CD8-positive, alpha-beta T cell (primary cell): ENCODE measurements at regions of chr14 and their contacts with region 1.

Region 1: DNA sequence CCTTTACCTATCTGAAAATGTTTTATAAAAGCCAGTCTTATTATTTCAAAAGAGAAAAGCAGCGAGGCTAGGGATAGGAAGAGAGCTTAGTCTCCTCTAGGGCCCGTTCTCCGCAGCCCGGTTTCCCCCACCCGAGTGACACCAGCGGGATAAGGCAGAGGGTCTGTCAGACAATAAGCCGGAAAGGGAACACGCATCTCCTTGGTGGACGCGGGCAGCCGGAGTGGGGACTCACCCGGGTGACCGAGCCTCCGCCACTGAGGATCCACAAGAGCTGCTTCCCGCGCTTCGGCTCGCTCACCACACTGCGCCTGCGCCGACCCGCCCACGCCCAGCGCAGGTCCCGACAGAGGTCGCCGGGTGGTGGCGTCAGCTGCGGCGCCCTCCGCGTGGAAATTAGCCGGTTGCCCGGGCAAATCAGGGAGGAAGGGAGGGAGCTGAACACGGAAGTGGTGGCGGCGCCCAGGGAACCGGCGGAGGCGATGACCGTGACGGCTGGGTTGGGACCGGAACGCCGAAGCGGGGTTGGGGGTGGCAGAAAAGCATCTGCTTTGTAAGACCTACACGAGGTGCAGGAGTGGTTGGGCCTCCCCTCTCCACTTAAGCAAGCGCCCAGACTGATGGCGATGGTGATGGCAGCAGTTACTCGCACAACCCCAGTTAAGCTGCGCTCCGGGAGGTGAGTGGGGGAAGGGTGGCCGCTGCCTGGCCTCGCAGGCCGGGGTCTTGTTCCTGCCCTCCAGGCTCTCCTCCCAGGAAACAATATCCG is at the starts of genes SOCS4 and WDHD1:
- DNase-seq: peak; percentile 87 to 97 (median 94)
- ATAC-seq: peak; percentile 86
- H3K4me3 ChIP-seq: peak within 1 kb of the TSS; percentile 71 to 91
- H3K4me3 Mint-ChIP-seq: peak within 1 kb of the TSS; percentile 95
- H3K27ac ChIP-seq: peak within 1 kb of the TSS; percentile 80 to 95
- H3K27ac Mint-ChIP-seq: peak within 1 kb of the TSS; percentile 95
- H3K4me1 ChIP-seq: peaks cover 37% of the 10 kb centered on the region
- H3K4me1 Mint-ChIP-seq: peaks cover 54% of the 10 kb centered on the region
- H3K27me3 ChIP-seq: no peaks in the 10 kb centered on the region
- H3K27me3 Mint-ChIP-seq: no peaks in the 10 kb centered on the region
- CTCF ChIP-seq: no peak
- total RNA-seq, gene SOCS4: 22.6 to 24.0 TPM
- total RNA-seq, gene WDHD1: 1.2 to 1.6 TPM

Region 2: GRCh38 chr14:54440873-54441868 is 585.8 kb before region 1 on chr14 and contains the start of gene CNIH1:
- CTCF ChIA-PET with region 1: no interaction called
- POLR2A ChIA-PET with region 1: no interaction called
- intact Hi-C with region 1: loop called in 1 of 2 experiments (anchors 2 kb)
- DNase-seq: peak; percentile 88 to 98 (median 93)
- ATAC-seq: peak; percentile 92
- H3K4me3 ChIP-seq: peak within 1 kb of the TSS; percentile 45 to 66
- H3K4me3 Mint-ChIP-seq: peak within 1 kb of the TSS; percentile 93
- H3K27ac ChIP-seq: peak within 1 kb of the TSS; percentile 76 to 81
- H3K27ac Mint-ChIP-seq: peak within 1 kb of the TSS; percentile 96
- H3K4me1 ChIP-seq: peaks cover 18% of the 10 kb centered on the region
- H3K4me1 Mint-ChIP-seq: peaks cover 41% of the 10 kb centered on the region
- H3K27me3 ChIP-seq: no peaks in the 10 kb centered on the region
- H3K27me3 Mint-ChIP-seq: no peaks in the 10 kb centered on the region
- CTCF ChIP-seq: peak; percentile 99
- total RNA-seq, gene CNIH1: 49.2 to 55.6 TPM

Region 3: DNA sequence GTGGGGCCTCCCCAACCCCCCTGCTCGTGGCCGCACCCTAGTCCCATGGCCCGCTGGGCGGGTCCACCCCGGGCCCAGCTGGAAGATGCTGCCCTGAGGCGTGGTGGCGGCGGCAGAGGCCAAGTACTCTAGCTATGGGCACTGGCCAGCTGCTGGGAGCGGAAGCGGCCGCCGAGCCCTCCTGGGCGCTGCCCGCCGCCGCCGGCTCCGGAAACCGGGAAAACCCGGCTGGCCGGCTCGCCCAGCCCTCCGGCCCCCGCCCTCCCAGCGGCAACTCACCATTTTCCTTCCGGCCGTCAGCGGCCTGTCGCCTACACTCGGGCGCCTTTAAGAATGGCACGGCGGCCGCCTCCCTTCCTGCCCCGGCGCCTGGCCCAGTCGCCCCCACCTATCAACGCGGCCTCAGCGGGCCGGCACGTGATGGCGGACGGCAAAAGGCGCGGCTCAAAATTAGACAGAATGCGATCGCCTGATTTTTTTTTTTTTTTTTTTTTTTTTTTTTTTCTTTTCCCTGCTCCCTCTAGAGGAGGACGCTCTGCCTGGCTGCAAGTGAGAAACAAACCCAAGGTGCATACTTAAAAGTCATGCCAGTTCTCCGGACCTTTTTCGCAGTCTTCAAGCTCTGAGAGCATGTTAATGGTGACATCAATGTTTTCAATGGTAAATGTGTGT is 538.2 kb before region 1 on chr14 and contains the start of gene GMFB:
- CTCF ChIA-PET with region 1: no interaction called
- POLR2A ChIA-PET with region 1: no interaction called
- intact Hi-C with region 1: loop called in 1 of 2 experiments (anchors 10 kb)
- DNase-seq: peak; percentile 77 to 94 (median 89)
- ATAC-seq: peak; percentile 96
- H3K4me3 ChIP-seq: peak within 1 kb of the TSS; percentile 73 to 92
- H3K4me3 Mint-ChIP-seq: peak within 1 kb of the TSS; percentile 90
- H3K27ac ChIP-seq: peak within 1 kb of the TSS; percentile 66 to 89
- H3K27ac Mint-ChIP-seq: peak within 1 kb of the TSS; percentile 94
- H3K4me1 ChIP-seq: peaks cover 38% of the 10 kb centered on the region
- H3K4me1 Mint-ChIP-seq: peaks cover 61% of the 10 kb centered on the region
- H3K27me3 ChIP-seq: no peaks in the 10 kb centered on the region
- H3K27me3 Mint-ChIP-seq: no peaks in the 10 kb centered on the region
- CTCF ChIP-seq: peak; percentile 17
- total RNA-seq, gene GMFB: 33.7 to 34.0 TPM

Region 4: DNA sequence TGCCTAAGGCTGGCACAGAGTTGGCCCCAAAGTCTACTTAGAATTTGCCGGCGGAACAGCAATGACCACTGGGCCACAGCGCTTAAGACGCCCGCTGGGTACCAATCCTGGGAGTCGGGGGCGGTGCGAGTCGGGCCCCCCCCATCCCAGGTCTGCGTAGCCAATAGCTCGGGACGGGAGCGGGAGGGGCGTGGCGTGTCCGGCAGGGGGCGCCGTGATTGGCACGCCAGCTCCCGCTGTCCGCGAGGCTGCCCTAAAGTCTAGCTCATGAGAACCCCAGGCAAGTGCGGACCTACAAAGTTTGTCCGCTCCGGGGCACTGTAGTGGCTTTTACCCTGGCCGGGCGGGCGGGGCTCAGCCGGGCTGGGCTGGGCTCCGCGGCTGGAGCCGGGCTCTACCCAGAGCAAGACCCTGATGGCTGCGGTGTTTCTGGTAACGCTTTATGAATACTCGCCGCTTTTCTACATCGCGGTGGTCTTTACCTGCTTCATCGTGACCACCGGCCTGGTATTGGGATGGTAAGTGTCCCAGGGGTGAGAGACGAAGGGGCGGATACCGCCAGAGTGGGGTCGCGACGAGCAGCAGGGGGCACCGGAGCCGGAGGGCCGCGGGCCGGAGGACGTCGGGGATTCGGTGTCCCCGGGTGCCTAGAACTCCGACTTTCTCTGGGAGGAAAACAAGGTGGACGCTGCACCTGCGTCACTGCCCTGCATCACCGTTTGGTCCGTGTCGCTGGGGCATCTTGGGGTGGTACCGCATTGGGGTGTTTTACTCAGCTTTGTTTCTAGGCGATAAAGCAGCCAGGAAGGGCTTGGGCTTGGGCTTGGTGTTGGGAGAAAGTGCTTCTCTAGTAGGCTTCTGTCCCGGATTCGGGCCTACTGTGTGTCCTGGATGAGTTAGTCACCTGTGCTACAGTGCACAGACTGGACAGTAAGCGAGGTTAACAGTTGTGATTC is 517.2 kb before region 1 on chr14 and contains the start of gene CGRRF1:
- CTCF ChIA-PET with region 1: no interaction called
- POLR2A ChIA-PET with region 1: no interaction called
- intact Hi-C with region 1: loop called in 1 of 2 experiments (anchors 5 kb)
- DNase-seq: peak; percentile 90 to 98 (median 96)
- ATAC-seq: peak; percentile 95
- H3K4me3 ChIP-seq: peak within 1 kb of the TSS; percentile 92 to 99
- H3K4me3 Mint-ChIP-seq: peak within 1 kb of the TSS; percentile 96
- H3K27ac ChIP-seq: peak within 1 kb of the TSS; percentile 73 to 92
- H3K27ac Mint-ChIP-seq: peak within 1 kb of the TSS; percentile 92
- H3K4me1 ChIP-seq: peaks cover 31% of the 10 kb centered on the region
- H3K4me1 Mint-ChIP-seq: peaks cover 51% of the 10 kb centered on the region
- H3K27me3 ChIP-seq: no peaks in the 10 kb centered on the region
- H3K27me3 Mint-ChIP-seq: peaks cover 4% of the 10 kb centered on the region
- CTCF ChIP-seq: peak; percentile 64
- total RNA-seq, gene CGRRF1: 59.6 to 59.9 TPM

Region 5: GRCh38 chr14:54881235-54881760 is 145.7 kb before region 1 on chr14:
- CTCF ChIA-PET with region 1: no interaction called
- POLR2A ChIA-PET with region 1: no interaction called
- intact Hi-C with region 1: loop called in 1 of 2 experiments (anchors 5 kb)
- DNase-seq: peak in 6 of 9 experiments; percentile 15 to 68 (median 42)
- ATAC-seq: peak; percentile 69
- H3K4me3 ChIP-seq: peak overlapping the region; percentile 46 to 56
- H3K4me3 Mint-ChIP-seq: peak overlapping the region; percentile 86
- H3K27ac ChIP-seq: peak overlapping the region; percentile 62 to 85
- H3K27ac Mint-ChIP-seq: peak overlapping the region; percentile 91
- H3K4me1 ChIP-seq: peaks cover 11% of the 10 kb centered on the region
- H3K4me1 Mint-ChIP-seq: peaks cover 44% of the 10 kb centered on the region
- H3K27me3 ChIP-seq: no peaks in the 10 kb centered on the region
- H3K27me3 Mint-ChIP-seq: no peaks in the 10 kb centered on the region
- CTCF ChIP-seq: no peak

Region 6: GRCh38 chr14:55160989-55161388 is 134.0 kb after region 1 on chr14:
- CTCF ChIA-PET with region 1: interaction called, 8 read pairs
- POLR2A ChIA-PET with region 1: no interaction called
- intact Hi-C with region 1: loop called in 1 of 2 experiments (anchors 1 kb)
- DNase-seq: peak in 2 of 9 experiments; percentile 57 to 69
- ATAC-seq: peak; percentile 88
- H3K4me3 ChIP-seq: no peak overlapping the region
- H3K4me3 Mint-ChIP-seq: no peak overlapping the region
- H3K27ac ChIP-seq: no peak overlapping the region
- H3K27ac Mint-ChIP-seq: no peak overlapping the region
- H3K4me1 ChIP-seq: no peaks in the 10 kb centered on the region
- H3K4me1 Mint-ChIP-seq: peaks cover 4% of the 10 kb centered on the region
- H3K27me3 ChIP-seq: no peaks in the 10 kb centered on the region
- H3K27me3 Mint-ChIP-seq: no peaks in the 10 kb centered on the region
- CTCF ChIP-seq: peak; percentile 68

Region 7: DNA sequence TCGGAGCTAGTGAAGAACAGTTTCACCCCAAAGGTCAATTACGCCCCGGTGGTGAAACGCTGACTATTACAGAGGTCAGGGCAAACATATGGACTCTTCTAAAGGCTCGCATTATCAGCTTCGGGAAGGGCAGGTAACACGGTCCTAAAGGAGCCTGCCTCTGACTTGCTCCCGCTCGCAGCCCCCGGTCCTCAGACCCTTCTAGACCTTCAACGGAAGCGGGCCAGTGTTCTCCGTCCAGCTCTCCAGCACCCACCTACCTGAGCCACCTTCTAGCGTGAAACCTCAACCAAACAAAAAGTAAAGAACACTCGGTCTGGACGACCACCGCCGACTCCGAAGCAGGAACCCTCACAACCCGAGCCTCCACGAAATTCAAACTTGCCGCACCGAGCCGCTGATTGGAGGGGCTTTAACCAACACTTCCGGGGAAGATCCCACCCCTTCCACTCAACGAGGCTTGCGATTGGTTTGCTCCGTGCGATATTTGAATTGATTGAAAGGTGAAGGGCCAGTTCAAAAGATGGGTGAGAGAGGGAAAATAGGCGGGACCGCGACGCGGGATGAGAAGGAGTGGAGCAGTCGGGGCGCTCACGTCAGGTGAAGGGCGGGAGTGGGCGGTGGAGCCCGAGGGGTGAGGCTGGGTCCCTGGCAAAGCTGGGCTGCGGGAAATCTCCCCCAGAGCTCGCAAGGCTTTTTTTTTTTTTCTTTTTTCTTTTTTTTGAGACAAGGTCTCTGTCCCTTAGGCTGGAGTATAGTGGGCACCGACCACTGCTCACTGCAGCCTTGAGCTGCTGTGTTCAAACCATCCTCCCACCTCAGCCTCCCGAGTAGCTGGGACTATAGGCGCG is 164.5 kb after region 1 on chr14 and contains the start of gene DLGAP5:
- CTCF ChIA-PET with region 1: no interaction called
- POLR2A ChIA-PET with region 1: no interaction called
- intact Hi-C with region 1: loop called in 1 of 2 experiments (anchors 5 kb)
- DNase-seq: peak; percentile 71 to 96 (median 85)
- ATAC-seq: peak; percentile 98
- H3K4me3 ChIP-seq: peak within 1 kb of the TSS; percentile 66 to 76
- H3K4me3 Mint-ChIP-seq: peak within 1 kb of the TSS; percentile 92
- H3K27ac ChIP-seq: peak within 1 kb of the TSS; percentile 9 to 52
- H3K27ac Mint-ChIP-seq: peak within 1 kb of the TSS; percentile 22
- H3K4me1 ChIP-seq: peaks cover 11% of the 10 kb centered on the region
- H3K4me1 Mint-ChIP-seq: peaks cover 12% of the 10 kb centered on the region
- H3K27me3 ChIP-seq: no peaks in the 10 kb centered on the region
- H3K27me3 Mint-ChIP-seq: no peaks in the 10 kb centered on the region
- CTCF ChIP-seq: no peak
- total RNA-seq, gene DLGAP5: 0.54 TPM in 1 of 2 experiments, not detected in the other